OCI-LY7 (cell line): ENCODE measurements at regions of chr2 and their contacts with region 1.

Region 1: GRCh38 chr2:4715069-4715468 is 977.1 kb upstream of the SOX11 start:
- DNase-seq: peak; percentile 22
- H3K4me3 ChIP-seq: no peak overlapping the region
- H3K27ac ChIP-seq: no peak overlapping the region
- H3K4me1 ChIP-seq: no peaks in the 10 kb centered on the region
- CTCF ChIP-seq: peak; percentile 77

Region 2: DNA sequence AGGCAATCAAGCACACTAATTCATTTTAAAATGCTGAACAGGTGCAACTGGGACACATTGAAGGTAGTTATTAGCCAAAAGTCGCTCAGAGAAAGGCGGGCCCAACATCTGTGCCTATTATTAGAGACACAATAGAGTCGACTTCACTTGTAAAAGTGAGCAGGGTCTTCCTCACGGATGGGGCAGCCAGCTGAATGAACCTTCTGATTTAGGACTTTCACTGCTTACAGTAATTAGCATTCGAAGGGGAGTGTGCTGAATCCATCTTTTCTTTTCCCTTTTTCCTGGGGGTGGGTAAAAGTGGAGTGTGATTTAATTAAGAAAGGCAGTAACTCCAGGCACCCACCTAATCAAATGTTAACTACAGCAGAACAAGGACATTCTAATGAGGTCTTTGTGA is 334.0 kb before region 1 on chr2:
- CTCF ChIA-PET with region 1: no interaction called
- POLR2A ChIA-PET with region 1: no interaction called
- intact Hi-C with region 1: loop called (anchors 10 kb)
- DNase-seq: no peak
- H3K4me3 ChIP-seq: no peak overlapping the region
- H3K27ac ChIP-seq: no peak overlapping the region
- H3K4me1 ChIP-seq: no peaks in the 10 kb centered on the region
- CTCF ChIP-seq: no peak